ENCODE measurements at regions of chr19 and their contacts with region 1.

Region 1: GRCh38 chr19:13277104-13277809 is 127.0 kb downstream of the IER2 start:
- DNase-seq: peak; percentile 39
- ATAC-seq: peak; percentile 94 to 95

Region 2: DNA sequence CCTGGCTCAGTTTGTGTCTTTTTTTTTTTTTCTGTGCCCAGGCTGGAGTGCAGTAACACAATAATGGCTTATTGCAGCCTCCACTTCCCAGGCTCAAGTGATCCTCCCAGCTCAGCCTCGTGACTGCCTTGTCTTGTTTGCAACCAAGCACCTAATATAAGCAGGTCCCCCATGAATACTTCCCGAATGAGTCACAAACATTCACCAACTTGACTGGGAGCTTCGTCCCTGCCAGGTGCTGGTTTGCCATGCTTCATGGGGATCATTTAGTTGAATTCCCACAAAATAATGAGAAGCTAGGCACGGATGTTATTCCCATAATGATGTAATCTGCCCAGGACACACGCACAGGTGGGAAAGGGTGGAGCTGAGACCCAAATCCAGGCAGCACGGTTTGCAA is 52.5 kb after region 1 on chr19:
- intact Hi-C with region 1: no loop called
- DNase-seq: no peak
- ATAC-seq: no peak

Region 3: GRCh38 chr19:13428336-13428735 is 151.1 kb after region 1 on chr19:
- intact Hi-C with region 1: loop called in 1 of 2 experiments (anchors 5 kb)
- DNase-seq: no peak
- ATAC-seq: no peak

Region 4: GRCh38 chr19:13588957-13589833 is 311.9 kb after region 1 on chr19:
- intact Hi-C with region 1: loop called (anchors 1 to 5 kb)
- DNase-seq: peak; percentile 71
- ATAC-seq: peak; percentile 82 to 83

Region 5: GRCh38 chr19:13727798-13728197 is 450.5 kb after region 1 on chr19:
- intact Hi-C with region 1: loop called in 1 of 2 experiments (anchors 10 kb)
- DNase-seq: no peak
- ATAC-seq: no peak

Region 6: GRCh38 chr19:13861732-13862531 is 584.7 kb after region 1 on chr19:
- intact Hi-C with region 1: loop called in 1 of 2 experiments (anchors 10 kb)
- DNase-seq: peak; percentile 94
- ATAC-seq: peak; percentile 92 to 94

Region 7: GRCh38 chr19:14048443-14049153 is 771.3 kb after region 1 on chr19:
- intact Hi-C with region 1: loop called in 1 of 2 experiments (anchors 10 kb)
- DNase-seq: no peak
- ATAC-seq: peak; percentile 53 to 58